ENCODE measurements at regions of chr2 and their contacts with region 1.

Region 1: DNA sequence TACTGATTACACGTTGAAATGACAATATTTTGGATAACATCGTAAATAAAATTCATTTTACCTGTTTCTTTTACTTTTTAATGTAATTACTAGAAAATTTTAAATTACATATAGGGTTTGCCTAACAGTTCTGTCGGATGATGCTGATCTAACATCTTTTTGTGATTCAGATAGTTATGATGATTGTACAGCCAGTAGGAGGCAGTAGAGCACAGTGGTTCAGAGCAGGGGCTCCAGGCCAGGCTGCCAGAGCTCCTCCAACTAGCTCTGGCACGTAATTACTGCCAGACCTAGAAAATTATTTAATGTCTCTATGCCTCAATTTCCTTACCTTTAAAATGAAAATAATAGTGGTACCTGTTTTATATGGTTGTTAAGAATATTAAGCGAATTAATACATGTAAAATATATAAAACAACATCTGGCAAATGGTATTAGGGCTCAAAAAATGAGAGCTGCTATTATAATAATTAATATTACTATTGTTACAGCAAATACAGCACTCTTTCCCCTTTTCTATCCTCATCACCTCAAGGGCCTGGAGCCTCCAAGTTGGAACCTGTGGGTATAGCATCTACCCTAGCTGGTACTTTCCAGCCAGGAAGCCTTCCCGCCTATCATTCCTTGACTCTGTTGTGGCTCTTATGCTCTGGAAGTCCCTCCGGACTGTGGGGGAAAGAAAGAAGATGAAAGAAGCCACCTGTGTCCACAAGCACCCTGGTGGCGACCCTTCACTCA is 47.7 kb upstream of the PLA2R1 start:
- DNase-seq: peak; percentile 27
- H3K4me3 ChIP-seq: no peak overlapping the region
- H3K27me3 ChIP-seq: no peaks in the 10 kb centered on the region
- CTCF ChIP-seq: peak; percentile 80

Region 2: GRCh38 chr2:159971365-159972122 is 138.6 kb before region 1 on chr2:
- CTCF ChIA-PET with region 1: no interaction called
- POLR2A ChIA-PET with region 1: no interaction called
- DNase-seq: no peak
- H3K4me3 ChIP-seq: no peak overlapping the region
- H3K27me3 ChIP-seq: no peaks in the 10 kb centered on the region
- CTCF ChIP-seq: no peak

Region 3: GRCh38 chr2:160039166-160039903 is 70.8 kb before region 1 on chr2:
- CTCF ChIA-PET with region 1: no interaction called
- POLR2A ChIA-PET with region 1: no interaction called
- DNase-seq: no peak
- H3K4me3 ChIP-seq: no peak overlapping the region
- H3K27me3 ChIP-seq: no peaks in the 10 kb centered on the region
- CTCF ChIP-seq: no peak

Region 4: DNA sequence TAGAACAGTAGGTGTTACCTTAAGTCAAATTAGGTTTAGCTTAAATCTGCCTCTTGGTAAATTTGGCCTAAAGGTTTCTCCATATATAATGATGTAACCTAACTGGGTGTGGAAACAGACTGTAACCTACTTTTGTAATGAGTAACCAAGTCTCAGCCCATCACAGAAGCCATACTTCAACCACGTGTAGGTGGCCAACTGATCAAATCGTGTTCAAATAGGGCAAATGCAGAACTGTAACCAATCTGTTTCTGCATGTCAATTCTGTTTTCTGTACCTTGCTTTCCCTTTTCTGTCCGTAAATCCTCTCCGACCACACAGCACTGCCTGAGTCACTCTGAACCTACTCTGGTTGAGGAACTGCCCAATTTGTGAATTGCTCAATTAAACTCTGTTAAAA is 13.7 kb before region 1 on chr2:
- CTCF ChIA-PET with region 1: interaction called, 12 read pairs
- POLR2A ChIA-PET with region 1: no interaction called
- DNase-seq: no peak
- H3K4me3 ChIP-seq: no peak overlapping the region
- H3K27me3 ChIP-seq: no peaks in the 10 kb centered on the region
- CTCF ChIP-seq: no peak

Region 5: GRCh38 chr2:160125828-160126227 is 15.7 kb after region 1 on chr2:
- CTCF ChIA-PET with region 1: interaction called, 20 read pairs
- POLR2A ChIA-PET with region 1: no interaction called
- DNase-seq: no peak
- H3K4me3 ChIP-seq: no peak overlapping the region
- H3K27me3 ChIP-seq: no peaks in the 10 kb centered on the region; the same call in 1 of the 2 replicates
- CTCF ChIP-seq: no peak

Region 6: DNA sequence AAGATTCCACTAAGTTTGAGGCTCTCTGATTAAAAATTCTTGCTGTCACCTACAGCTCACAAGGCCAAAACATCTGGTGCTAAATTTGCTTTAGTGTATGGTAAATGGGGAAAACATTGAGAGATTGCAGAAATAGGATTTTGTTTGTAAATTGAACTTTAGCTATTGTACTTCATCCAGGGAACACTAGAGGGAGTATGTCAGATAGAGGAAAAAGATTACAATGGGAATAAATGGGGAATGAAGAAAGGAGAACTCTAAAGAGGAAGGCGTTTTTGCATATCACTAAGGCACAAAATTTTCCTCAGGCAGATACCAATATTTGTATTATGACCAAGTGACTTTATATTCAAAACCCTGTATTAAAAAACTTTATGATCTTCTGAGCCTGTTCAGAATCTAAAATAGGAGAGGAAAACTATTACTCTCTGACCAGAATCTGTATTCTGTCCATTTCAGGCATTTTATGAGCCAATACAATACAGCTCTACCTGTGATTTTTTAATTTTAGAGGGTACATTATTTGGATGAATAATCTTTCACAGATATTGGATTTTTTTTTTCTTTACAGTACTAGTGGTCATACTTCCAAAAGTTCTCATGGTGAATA is 142.3 kb after region 1 on chr2:
- CTCF ChIA-PET with region 1: interaction called, 10 read pairs
- POLR2A ChIA-PET with region 1: no interaction called
- DNase-seq: no peak
- H3K4me3 ChIP-seq: no peak overlapping the region
- H3K27me3 ChIP-seq: no peaks in the 10 kb centered on the region
- CTCF ChIP-seq: peak; percentile 73

Region 7: GRCh38 chr2:160269803-160270570 is 159.9 kb after region 1 on chr2:
- CTCF ChIA-PET with region 1: interaction called, 24 read pairs
- POLR2A ChIA-PET with region 1: no interaction called
- DNase-seq: peak; percentile 74
- H3K4me3 ChIP-seq: peak overlapping the region; percentile 39
- H3K27me3 ChIP-seq: no peaks in the 10 kb centered on the region
- CTCF ChIP-seq: peak; percentile 78

Region 8: GRCh38 chr2:161004379-161004778 is 894.3 kb after region 1 on chr2:
- CTCF ChIA-PET with region 1: interaction called, 11 read pairs
- POLR2A ChIA-PET with region 1: no interaction called
- DNase-seq: no peak
- H3K4me3 ChIP-seq: no peak overlapping the region
- H3K27me3 ChIP-seq: no peaks in the 10 kb centered on the region
- CTCF ChIP-seq: peak; percentile 54